Left cardiac atrium (tissue), 4 donors: ENCODE measurements at regions of chr2 and their contacts with region 1.

Region 1: DNA sequence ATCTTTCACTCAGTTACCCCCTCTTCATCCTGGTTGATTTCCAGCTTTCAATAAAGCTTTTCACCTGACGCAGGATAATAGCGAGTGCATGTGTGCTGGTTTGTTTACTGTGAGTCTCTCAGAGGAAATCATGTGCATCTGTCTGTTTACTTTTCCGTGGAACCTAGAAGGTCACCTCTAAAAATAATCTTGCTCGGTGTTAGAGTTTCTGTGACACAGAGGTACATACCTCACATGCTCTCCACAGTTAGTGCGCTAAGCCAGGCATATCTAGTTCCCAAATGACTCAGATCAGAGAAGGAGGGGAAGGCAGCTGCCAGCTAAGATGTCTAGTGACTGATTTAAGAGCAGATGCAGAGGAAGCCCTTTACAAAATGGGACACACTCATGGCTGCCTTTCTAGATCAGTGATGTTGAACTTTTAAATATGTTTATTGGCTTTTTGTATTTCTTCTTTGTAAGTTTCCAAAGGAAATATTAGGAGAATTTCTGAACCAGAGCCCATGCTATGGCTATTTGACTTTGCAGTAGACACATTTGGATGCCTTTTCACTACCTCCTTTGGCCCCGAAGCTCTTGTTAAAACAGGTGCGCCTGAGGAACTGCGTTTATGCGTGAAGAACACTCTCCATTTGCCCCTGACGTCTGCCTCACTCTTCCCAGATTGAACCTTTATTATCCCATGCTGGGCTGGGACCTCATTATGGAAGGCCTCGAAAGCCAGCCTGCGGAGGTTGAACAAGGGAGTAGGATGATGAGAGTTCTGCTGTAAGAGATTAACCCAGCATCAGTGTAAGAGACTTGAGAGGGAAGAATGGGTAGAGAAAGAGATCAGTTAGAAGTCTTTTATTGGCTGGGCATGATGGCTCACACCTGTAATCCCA is 145.6 kb downstream of the FAM161A start:
- DNase-seq: no peak
- ATAC-seq: peak; percentile 67 to 93

Region 2: DNA sequence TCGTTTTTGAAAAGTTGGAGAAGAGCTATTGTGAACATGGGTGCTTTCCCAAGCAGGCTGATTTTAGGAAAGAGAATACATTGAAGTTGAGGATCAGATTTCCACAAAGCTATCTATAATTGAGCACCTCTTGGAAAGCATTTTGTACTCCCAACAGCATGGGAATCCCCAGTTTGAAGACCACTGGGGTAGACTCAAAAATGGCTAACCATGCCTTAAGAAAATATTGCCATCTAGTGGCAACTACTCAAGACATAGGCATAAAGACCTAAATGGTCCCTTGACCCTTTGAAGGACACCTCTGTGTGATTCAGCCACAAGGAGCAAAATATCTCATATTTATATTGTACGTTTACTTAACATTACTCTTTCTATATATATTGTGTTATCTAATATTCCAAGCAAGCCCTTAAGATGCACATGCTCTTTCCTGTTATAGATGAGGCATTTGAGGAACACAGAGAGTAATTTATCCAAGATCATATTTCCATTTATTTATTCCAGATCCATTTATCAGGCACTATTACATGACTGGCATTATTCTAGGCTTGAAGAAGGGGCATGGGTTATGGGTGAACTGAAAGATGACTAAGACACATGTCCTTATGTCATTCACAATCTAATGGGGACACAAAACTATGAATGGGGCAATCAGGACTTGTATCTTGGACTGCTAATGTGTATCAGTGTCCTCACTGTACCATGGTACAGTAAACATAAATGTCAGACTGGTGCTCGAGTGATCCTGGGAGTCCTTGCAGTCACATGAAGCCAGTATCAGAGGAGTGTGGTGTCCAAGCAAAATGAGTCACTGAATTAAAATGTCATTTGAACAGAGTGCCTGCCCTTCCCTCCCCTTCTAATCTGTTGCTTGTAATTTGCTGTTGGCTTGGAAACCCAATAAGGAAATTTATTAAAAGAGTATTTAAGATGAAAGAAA is 49.1 kb before region 1 on chr2:
- intact Hi-C with region 1: loop called in 1 of 2 experiments (anchors 5 kb)
- DNase-seq: no peak
- ATAC-seq: peak; percentile 80 to 90

Region 3: GRCh38 chr2:61959381-61960293 is 251.4 kb after region 1 on chr2:
- intact Hi-C with region 1: no loop called
- DNase-seq: no peak
- ATAC-seq: no peak